Calu3 (cell line): ENCODE measurements at regions of chr20 and their contacts with region 1.

Region 1: DNA sequence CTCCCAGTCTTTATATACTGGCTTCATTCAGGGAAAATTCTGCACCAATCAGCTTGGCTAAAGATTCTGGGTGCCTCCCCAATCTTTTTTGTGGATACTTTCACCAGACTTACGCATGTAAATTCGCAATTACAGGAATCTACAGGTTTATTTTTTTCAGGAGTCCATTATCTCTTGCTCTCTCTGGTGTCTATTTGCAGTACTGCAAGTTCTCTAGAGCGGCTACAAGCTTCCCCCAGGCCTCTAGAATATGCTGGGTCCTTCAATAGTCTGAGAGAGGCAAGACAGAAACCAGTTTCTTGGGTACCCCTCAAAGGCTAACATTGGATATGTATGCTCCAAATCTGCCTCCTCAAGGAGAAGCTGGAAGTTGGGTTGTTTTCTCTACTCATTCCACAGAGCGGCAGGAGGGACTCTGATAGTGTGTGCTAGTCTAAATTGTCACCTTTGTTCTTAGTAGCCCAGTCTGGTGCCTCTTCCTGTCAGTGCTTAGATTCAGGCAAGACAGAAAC is 58.5 kb downstream of the SUN5 start:
- DNase-seq: peak; percentile 33
- H3K4me3 Mint-ChIP-seq: no peak overlapping the region
- H3K27ac Mint-ChIP-seq: no peak overlapping the region
- H3K4me1 Mint-ChIP-seq: no peaks in the 10 kb centered on the region
- H3K27me3 Mint-ChIP-seq: peaks cover 65% of the 10 kb centered on the region
- CTCF ChIP-seq: peak; percentile 75

Region 2: DNA sequence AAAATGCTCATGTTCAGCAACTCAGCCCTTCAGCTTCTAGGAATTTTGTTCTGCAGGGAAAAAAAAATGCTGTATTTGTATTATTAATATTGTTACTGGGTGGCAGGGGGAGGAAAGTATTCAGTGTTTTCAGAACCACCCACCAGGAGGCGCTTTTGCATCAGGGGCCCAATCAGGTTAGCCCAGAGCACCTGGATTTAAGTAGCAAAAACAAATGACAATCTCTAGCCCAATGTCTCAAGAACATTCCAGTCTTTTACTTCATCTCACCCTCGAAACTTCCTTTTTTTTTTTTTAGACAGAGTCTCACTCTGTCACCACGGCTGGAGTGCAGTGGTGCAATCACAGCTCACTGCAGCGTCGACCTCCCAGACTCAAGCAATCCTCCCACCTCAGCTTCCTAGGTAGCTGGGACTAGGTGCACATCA is 271.4 kb before region 1 on chr20:
- CTCF ChIA-PET with region 1: no interaction called
- intact Hi-C with region 1: loop called (anchors 2 kb)
- DNase-seq: peak; percentile 83
- H3K4me3 Mint-ChIP-seq: no peak overlapping the region
- H3K27ac Mint-ChIP-seq: no peak overlapping the region
- H3K4me1 Mint-ChIP-seq: no peaks in the 10 kb centered on the region
- H3K27me3 Mint-ChIP-seq: no peaks in the 10 kb centered on the region
- CTCF ChIP-seq: peak; percentile 88

Region 3: DNA sequence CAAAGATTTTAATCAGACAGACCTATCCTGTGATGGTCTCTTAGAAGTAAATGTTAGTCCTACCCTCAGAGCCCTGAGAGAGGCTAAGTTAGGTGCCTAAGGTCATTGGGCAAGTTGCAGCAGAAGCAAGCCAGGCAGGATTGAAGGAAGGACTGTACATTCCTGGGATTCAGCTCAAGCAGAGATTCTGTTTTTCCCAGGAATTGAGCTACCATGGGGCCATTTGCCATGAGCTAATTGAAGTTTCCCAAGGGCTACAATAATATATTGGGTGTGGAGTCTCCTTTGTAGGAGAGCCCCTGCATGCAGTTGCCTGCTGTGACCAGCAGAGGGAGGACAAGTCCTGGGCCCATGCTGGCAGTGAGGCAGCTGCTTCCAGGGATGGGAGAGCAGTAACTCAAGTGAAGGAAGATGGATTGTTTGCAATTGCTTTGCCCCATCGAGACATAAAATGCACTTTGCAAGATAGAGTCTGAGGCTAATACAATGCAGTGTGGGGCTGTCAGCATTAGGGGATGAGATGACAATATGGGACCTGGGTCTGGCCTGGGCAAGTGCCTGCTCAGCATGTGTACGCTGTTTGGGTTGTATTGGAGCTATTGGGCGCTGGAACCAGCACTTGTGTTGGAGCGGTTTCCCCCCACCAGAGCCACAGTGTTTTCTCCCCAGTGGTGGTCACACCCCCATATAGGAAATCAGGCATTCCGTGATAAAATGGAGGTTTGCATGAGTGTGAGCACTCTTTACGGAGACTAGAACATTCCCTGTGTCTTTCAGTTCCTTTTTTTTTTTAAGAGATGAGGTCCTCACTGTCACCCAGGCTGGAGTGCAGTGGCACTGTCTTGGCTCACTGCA is 155.6 kb before region 1 on chr20:
- CTCF ChIA-PET with region 1: interaction called, 7 read pairs
- intact Hi-C with region 1: loop called (anchors 1 kb)
- DNase-seq: peak; percentile 90
- H3K4me3 Mint-ChIP-seq: no peak overlapping the region
- H3K27ac Mint-ChIP-seq: no peak overlapping the region
- H3K4me1 Mint-ChIP-seq: peaks cover 8% of the 10 kb centered on the region
- H3K27me3 Mint-ChIP-seq: no peaks in the 10 kb centered on the region
- CTCF ChIP-seq: peak; percentile 100

Region 4: GRCh38 chr20:32902456-32903420 is 43.0 kb before region 1 on chr20:
- CTCF ChIA-PET with region 1: interaction called, 9 read pairs
- intact Hi-C with region 1: loop called (anchors 2 kb)
- DNase-seq: peak; percentile 75
- H3K4me3 Mint-ChIP-seq: no peak overlapping the region
- H3K27ac Mint-ChIP-seq: no peak overlapping the region
- H3K4me1 Mint-ChIP-seq: no peaks in the 10 kb centered on the region
- H3K27me3 Mint-ChIP-seq: peaks cover 28% of the 10 kb centered on the region
- CTCF ChIP-seq: peak; percentile 97